ENCODE measurements at regions of chr17 and their contacts with region 1.

Region 1: GRCh38 chr17:29789196-29790170 is 140.5 kb downstream of the SSH2 start:
- DNase-seq: no peak
- H3K4me3 ChIP-seq: no peak overlapping the region
- CTCF ChIP-seq: no peak

Region 2: DNA sequence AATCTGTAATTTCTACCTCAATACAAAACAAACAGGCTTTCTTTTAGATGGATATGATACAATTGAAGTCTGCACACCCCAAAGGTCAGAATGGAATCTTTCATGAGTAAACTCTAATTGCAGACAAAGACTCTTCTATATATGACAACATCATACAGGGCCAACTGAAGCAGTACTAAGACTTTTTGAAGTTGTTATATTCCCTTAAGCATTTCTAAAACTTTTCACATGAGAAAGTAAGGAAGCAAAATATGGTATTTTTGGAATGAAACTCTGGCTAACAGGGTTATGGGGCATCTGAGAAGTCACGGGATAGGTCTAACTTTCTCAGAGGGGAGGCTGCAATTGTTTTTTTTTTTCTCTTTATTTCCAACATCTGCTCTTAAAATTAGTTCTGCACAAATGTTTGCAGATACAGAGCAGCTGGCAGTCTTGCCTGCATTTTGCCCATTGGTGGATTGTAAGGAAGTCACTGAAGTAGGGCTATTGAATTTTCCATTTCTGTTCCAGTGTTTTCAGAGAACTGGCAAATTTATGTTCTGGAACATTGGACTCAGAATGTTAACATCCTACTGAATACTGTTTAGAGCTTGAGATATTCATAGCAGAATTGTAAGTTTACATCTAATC is 81.5 kb after region 1 on chr17:
- in situ Hi-C with region 1: no loop called
- DNase-seq: no peak
- H3K4me3 ChIP-seq: no peak overlapping the region
- CTCF ChIP-seq: no peak

Region 3: GRCh38 chr17:29931231-29931932 is 141.9 kb after region 1 on chr17:
- in situ Hi-C with region 1: loop called (anchors 5 kb)
- DNase-seq: peak; percentile 62
- H3K4me3 ChIP-seq: peak overlapping the region; percentile 86
- CTCF ChIP-seq: peak; percentile 94

Measured in astrocyte of the cerebellum (primary cell).